BJ (cell line): ENCODE measurements at regions of chr6 and their contacts with region 1.

Region 1: GRCh38 chr6:121305957-121306607 is 28.2 kb downstream of the TBC1D32 start:
- DNase-seq: no peak
- H3K4me3 ChIP-seq: no peak overlapping the region
- H3K27me3 ChIP-seq: no peaks in the 10 kb centered on the region
- CTCF ChIP-seq: peak; percentile 40; the same call in 1 of the 2 replicates

Region 2: GRCh38 chr6:120816794-120817193 is 489.3 kb before region 1 on chr6:
- CTCF ChIA-PET with region 1: no interaction called
- POLR2A ChIA-PET with region 1: no interaction called
- DNase-seq: no peak
- H3K4me3 ChIP-seq: no peak overlapping the region
- H3K27me3 ChIP-seq: no peaks in the 10 kb centered on the region
- CTCF ChIP-seq: no peak

Region 3: DNA sequence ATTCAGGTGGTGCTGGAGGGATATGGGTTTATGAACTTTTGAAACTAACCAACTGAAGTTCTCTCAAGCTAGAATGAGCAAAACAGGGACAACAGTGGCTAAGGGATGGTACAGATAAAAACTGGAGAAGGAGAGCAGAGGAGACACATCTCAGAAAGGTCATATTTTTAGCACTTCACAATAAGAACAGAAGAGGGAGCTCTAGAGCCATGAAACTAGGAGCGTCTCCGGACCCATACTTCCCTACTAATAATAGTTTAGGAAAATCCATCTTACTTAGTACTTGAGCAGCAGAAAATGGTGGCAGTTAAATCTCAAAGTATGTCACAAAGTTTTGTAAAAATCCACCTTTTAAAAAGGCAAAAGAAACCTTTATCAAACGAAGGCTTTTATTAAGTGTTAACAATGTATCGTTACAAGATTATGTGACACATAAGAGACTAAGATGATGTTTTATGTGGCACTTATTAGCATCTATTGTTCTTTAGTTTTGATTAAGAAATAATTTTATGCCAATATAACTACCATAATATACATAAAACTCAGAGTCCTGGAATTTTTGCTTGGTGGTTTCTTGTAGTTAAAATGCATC is 250.4 kb before region 1 on chr6:
- CTCF ChIA-PET with region 1: interaction called, 11 read pairs
- POLR2A ChIA-PET with region 1: no interaction called
- DNase-seq: peak; percentile 3
- H3K4me3 ChIP-seq: no peak overlapping the region
- H3K27me3 ChIP-seq: no peaks in the 10 kb centered on the region
- CTCF ChIP-seq: peak; percentile 71

Region 4: DNA sequence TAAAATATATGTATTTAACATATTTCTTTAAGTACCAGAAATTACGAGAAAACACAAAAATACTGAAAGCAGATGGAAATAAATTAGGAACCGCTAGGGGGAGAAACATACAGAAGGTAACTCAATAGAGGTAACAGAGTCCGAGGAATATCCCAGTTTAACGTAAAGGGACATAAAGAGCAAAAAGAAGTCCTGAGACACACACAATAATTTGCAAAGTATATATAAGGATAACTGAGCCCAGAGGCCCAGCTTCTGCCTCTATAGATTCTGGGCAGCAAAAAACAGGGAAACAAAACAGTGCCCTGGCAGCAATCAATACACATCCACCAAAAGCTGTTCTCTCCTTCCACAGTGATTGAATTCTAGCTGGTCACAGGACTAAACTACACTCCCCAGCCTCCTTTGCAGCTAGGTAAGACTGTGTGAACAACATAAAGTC is 13.1 kb after region 1 on chr6:
- CTCF ChIA-PET with region 1: interaction called, 10 read pairs
- POLR2A ChIA-PET with region 1: no interaction called
- DNase-seq: no peak
- H3K4me3 ChIP-seq: no peak overlapping the region
- H3K27me3 ChIP-seq: no peaks in the 10 kb centered on the region
- CTCF ChIP-seq: peak; percentile 51